ENCODE measurements at regions of chr3 and their contacts with region 1.

Region 1: GRCh38 chr3:41881233-41881821 is 80.6 kb downstream of the ULK4 start:
- DNase-seq: peak in 1 of 2 experiments; percentile 42
- H3K4me3 ChIP-seq: no peak overlapping the region
- H3K4me3 Mint-ChIP-seq: no peak overlapping the region
- H3K27ac Mint-ChIP-seq: no peak overlapping the region
- H3K4me1 ChIP-seq: no peaks in the 10 kb centered on the region
- H3K4me1 Mint-ChIP-seq: no peaks in the 10 kb centered on the region
- H3K27me3 ChIP-seq: no peaks in the 10 kb centered on the region
- H3K27me3 Mint-ChIP-seq: no peaks in the 10 kb centered on the region
- CTCF ChIP-seq: peak; percentile 51 to 55

Region 2: DNA sequence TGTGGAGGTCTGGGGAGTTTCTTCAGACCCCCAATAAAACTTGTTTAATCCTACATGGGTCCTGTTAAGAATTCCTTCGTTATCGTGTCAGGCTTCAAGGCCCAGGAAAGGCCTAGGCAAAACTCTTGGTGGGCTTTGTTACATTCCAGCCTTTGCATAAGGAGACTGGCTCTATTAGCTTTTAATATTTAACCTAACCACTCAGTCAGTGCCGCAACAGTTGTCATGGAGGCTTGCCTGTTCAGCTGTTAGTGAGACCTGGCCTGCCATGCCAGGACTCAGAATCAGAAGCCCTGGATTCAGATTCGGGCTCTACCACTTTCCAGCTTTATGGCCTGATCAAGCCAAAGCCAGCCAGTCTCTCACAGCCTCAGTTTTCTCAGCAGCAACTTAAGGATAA is 1552.3 kb before region 1 on chr3:
- CTCF ChIA-PET with region 1: no interaction called
- POLR2A ChIA-PET with region 1: no interaction called
- intact Hi-C with region 1: loop called (anchors 5 kb)
- DNase-seq: peak in 1 of 2 experiments; percentile 6
- H3K4me3 ChIP-seq: no peak overlapping the region
- H3K4me3 Mint-ChIP-seq: no peak overlapping the region
- H3K27ac Mint-ChIP-seq: no peak overlapping the region
- H3K4me1 ChIP-seq: 0 out of 2 replicates have a peak, but pooled peaks cover 4% of the 10 kb centered on the region
- H3K4me1 Mint-ChIP-seq: no peaks in the 10 kb centered on the region
- H3K27me3 ChIP-seq: no peaks in the 10 kb centered on the region
- H3K27me3 Mint-ChIP-seq: no peaks in the 10 kb centered on the region
- CTCF ChIP-seq: no peak

Region 3: DNA sequence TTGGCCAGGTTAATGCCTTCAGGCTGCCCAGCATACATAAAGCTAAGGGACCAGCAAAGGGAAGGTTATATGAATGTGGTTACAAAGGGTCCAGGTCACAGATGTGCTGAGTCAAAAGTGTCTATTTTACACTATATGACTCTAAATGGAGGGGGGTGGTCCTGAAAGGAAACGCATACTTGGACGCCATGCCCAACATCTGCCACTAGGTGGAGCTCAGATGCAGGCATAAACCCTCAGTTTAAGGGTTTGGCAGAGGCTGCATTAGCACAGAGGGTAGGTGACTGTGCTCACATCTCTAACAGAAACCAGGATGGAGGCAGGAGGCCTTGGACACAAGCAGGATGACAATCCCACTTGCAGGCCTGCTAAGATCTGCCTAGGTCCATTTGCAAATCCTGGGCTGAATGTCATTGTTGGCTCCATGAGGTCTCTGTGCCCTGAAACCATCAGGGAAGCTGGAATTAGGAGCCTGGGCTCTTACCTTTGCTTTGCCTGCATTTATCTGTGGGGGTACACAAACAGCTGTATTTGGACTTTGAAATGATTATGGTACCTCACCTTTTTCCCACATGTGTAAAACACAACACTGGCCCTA is 1300.7 kb before region 1 on chr3:
- CTCF ChIA-PET with region 1: no interaction called
- POLR2A ChIA-PET with region 1: no interaction called
- intact Hi-C with region 1: loop called (anchors 1 kb)
- DNase-seq: peak; percentile 63 to 74
- H3K4me3 ChIP-seq: no peak overlapping the region
- H3K4me3 Mint-ChIP-seq: no peak overlapping the region
- H3K27ac Mint-ChIP-seq: no peak overlapping the region
- H3K4me1 ChIP-seq: no peaks in the 10 kb centered on the region
- H3K4me1 Mint-ChIP-seq: no peaks in the 10 kb centered on the region
- H3K27me3 ChIP-seq: no peaks in the 10 kb centered on the region
- H3K27me3 Mint-ChIP-seq: peaks cover 3% of the 10 kb centered on the region
- CTCF ChIP-seq: peak; percentile 91 to 94

Region 4: GRCh38 chr3:40719660-40720287 is 1161.6 kb before region 1 on chr3:
- CTCF ChIA-PET with region 1: no interaction called
- POLR2A ChIA-PET with region 1: no interaction called
- intact Hi-C with region 1: loop called (anchors 5 kb)
- DNase-seq: peak in 1 of 2 experiments; percentile 25
- H3K4me3 ChIP-seq: no peak overlapping the region
- H3K4me3 Mint-ChIP-seq: no peak overlapping the region
- H3K27ac Mint-ChIP-seq: no peak overlapping the region
- H3K4me1 ChIP-seq: peaks cover 8% of the 10 kb centered on the region; the same call in 1 of the 2 replicates
- H3K4me1 Mint-ChIP-seq: peaks cover 9% of the 10 kb centered on the region
- H3K27me3 ChIP-seq: no peaks in the 10 kb centered on the region
- H3K27me3 Mint-ChIP-seq: peaks cover 5% of the 10 kb centered on the region
- CTCF ChIP-seq: peak; percentile 21 to 37

Region 5: GRCh38 chr3:41369838-41370237 is 511.5 kb before region 1 on chr3:
- CTCF ChIA-PET with region 1: no interaction called
- POLR2A ChIA-PET with region 1: no interaction called
- intact Hi-C with region 1: loop called (anchors 5 kb)
- DNase-seq: no peak
- H3K4me3 ChIP-seq: no peak overlapping the region
- H3K4me3 Mint-ChIP-seq: no peak overlapping the region
- H3K27ac Mint-ChIP-seq: no peak overlapping the region
- H3K4me1 ChIP-seq: no peaks in the 10 kb centered on the region
- H3K4me1 Mint-ChIP-seq: no peaks in the 10 kb centered on the region
- H3K27me3 ChIP-seq: no peaks in the 10 kb centered on the region
- H3K27me3 Mint-ChIP-seq: no peaks in the 10 kb centered on the region
- CTCF ChIP-seq: no peak

Region 6: GRCh38 chr3:41448398-41448797 is 432.9 kb before region 1 on chr3:
- CTCF ChIA-PET with region 1: no interaction called
- POLR2A ChIA-PET with region 1: no interaction called
- intact Hi-C with region 1: loop called (anchors 5 kb)
- DNase-seq: no peak
- H3K4me3 ChIP-seq: no peak overlapping the region
- H3K4me3 Mint-ChIP-seq: no peak overlapping the region
- H3K27ac Mint-ChIP-seq: no peak overlapping the region
- H3K4me1 ChIP-seq: no peaks in the 10 kb centered on the region
- H3K4me1 Mint-ChIP-seq: no peaks in the 10 kb centered on the region
- H3K27me3 ChIP-seq: no peaks in the 10 kb centered on the region
- H3K27me3 Mint-ChIP-seq: no peaks in the 10 kb centered on the region
- CTCF ChIP-seq: no peak

Region 7: DNA sequence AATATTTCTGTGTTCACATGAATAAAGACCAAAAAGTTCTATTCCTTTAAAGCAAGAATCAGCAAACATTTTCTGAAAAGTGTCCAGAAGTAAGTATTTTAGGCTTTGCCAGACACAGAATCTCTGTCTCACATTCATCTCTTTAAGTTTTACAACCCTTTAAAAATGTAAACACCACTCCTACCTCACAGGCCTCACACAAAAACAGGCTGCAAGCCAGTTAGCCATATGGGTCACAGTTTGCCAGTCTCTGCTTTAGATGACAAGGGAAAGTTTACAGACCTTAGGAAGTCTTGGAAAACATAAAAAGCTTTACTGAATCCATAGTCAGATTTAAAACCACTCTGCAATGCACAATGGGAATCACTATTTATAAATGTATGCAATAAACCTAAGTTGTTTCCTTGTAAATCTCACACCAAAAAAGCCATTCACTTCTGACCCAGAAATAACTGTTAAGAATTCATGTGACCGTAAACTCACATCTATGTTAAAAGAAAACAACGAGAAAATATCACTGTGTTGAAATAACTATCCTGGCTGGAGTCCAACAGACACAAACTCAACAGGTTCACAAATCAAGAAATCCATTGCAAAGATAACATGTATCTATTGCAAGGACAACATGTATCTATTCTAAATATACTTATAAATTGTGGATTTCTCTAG is 227.6 kb before region 1 on chr3:
- CTCF ChIA-PET with region 1: no interaction called
- POLR2A ChIA-PET with region 1: no interaction called
- intact Hi-C with region 1: no loop called
- DNase-seq: no peak
- H3K4me3 ChIP-seq: no peak overlapping the region
- H3K4me3 Mint-ChIP-seq: no peak overlapping the region
- H3K27ac Mint-ChIP-seq: no peak overlapping the region
- H3K4me1 ChIP-seq: no peaks in the 10 kb centered on the region
- H3K4me1 Mint-ChIP-seq: no peaks in the 10 kb centered on the region
- H3K27me3 ChIP-seq: no peaks in the 10 kb centered on the region; the same call in 1 of the 2 replicates
- H3K27me3 Mint-ChIP-seq: no peaks in the 10 kb centered on the region
- CTCF ChIP-seq: no peak

Region 8: GRCh38 chr3:41690766-41691563 is 190.4 kb before region 1 on chr3:
- CTCF ChIA-PET with region 1: no interaction called
- POLR2A ChIA-PET with region 1: no interaction called
- intact Hi-C with region 1: loop called (anchors 10 kb)
- DNase-seq: no peak
- H3K4me3 ChIP-seq: no peak overlapping the region
- H3K4me3 Mint-ChIP-seq: no peak overlapping the region
- H3K27ac Mint-ChIP-seq: no peak overlapping the region
- H3K4me1 ChIP-seq: 0 out of 2 replicates have a peak, but pooled peaks cover 3% of the 10 kb centered on the region
- H3K4me1 Mint-ChIP-seq: no peaks in the 10 kb centered on the region
- H3K27me3 ChIP-seq: no peaks in the 10 kb centered on the region
- H3K27me3 Mint-ChIP-seq: no peaks in the 10 kb centered on the region
- CTCF ChIP-seq: no peak